ENCODE measurements at regions of chr16 and their contacts with region 1.

Region 1: GRCh38 chr16:66588981-66589713 is 9.9 kb downstream of the CMTM2 start:
- DNase-seq: no peak
- ATAC-seq: peak; percentile 87
- H3K4me3 Mint-ChIP-seq: peak overlapping the region; percentile 13
- H3K27ac Mint-ChIP-seq: no peak overlapping the region
- H3K4me1 Mint-ChIP-seq: peaks cover 34% of the 10 kb centered on the region
- H3K27me3 Mint-ChIP-seq: peaks cover 20% of the 10 kb centered on the region
- CTCF ChIP-seq: no peak

Region 2: DNA sequence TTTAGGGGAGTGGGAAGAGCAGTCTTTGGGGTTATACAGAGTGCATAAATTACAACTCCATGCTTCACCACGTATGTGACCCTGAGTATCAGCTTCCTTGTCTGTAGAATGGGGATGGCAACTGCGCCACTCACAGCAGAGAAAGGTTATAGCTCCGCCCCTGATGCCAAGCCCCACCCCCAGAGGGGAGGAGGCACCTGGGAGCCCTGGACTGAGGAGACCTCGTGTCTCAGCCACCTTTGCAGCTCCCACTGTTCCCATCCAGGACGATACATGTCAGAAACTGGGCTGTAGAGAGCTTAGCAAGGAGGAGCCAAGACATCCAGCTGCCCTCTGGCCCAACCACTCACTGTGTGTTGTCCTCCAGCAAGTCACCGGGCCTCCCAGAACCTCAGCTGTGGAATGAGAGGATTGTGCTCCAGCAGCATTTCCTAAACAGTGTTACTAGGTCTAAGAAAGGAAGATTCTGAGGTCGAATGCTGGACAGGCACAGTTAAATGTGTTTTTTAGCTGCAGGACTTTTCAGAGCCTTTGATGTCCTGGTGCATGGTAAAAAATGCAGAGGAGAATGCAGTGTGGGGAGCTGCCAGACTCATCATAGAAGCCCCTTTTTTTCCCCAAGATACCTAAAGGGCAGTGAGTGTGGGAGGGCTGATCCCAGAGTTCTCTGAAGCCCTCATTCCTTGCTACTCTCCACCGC is 112.7 kb before region 1 on chr16:
- CTCF ChIA-PET with region 1: interaction called, 11 read pairs
- POLR2A ChIA-PET with region 1: no interaction called
- intact Hi-C with region 1: loop called (anchors 1 kb)
- DNase-seq: no peak
- ATAC-seq: no peak
- H3K4me3 Mint-ChIP-seq: no peak overlapping the region
- H3K27ac Mint-ChIP-seq: no peak overlapping the region
- H3K4me1 Mint-ChIP-seq: peaks cover 22% of the 10 kb centered on the region
- H3K27me3 Mint-ChIP-seq: peaks cover 10% of the 10 kb centered on the region
- CTCF ChIP-seq: no peak

Region 3: DNA sequence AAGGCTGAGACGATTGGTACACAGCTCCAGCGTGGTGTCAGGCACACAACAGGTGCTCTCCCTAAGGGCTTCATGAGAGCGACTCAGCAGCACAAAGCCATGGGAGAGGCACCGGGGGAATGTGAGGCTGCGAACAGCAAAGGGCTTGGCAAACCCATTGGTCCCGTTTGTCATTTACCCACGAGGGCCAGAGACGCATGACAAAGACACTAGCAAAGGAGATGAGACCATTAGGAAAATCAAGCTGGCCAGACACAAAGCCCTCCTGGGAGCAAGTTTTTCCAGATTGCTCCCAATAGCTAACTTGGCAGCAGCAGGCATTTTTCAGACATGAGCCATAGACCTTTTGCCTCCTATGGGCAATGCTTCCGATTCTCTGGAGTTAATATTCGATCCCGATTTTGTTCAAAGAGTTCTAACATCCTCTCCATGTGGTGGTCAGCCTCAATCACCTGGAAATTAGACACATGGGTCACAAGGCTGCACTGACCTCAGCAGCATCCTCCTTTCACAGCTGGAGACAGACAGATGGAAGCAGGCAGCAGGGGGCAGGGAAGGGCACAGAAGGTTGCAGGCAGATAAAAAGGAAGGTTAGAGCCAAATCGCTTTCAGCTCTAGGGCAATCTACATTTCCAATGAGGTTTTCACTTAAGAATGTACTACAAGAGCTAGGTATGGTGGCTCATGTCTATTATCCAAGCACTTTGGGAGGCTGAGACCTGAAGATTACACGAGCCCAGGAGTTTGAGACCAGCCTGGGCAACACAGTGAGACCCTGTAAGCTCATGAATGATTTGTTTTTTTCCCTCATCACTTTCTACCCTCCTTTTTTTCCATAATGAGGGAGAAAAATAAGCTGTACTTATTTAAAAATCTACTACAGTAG is 77.3 kb before region 1 on chr16:
- CTCF ChIA-PET with region 1: interaction called, 4 read pairs
- POLR2A ChIA-PET with region 1: interaction called, 3 read pairs
- intact Hi-C with region 1: loop called (anchors 1 kb)
- DNase-seq: no peak
- ATAC-seq: no peak
- H3K4me3 Mint-ChIP-seq: no peak overlapping the region
- H3K27ac Mint-ChIP-seq: no peak overlapping the region
- H3K4me1 Mint-ChIP-seq: peaks cover 34% of the 10 kb centered on the region
- H3K27me3 Mint-ChIP-seq: no peaks in the 10 kb centered on the region
- CTCF ChIP-seq: no peak